ENCODE measurements at regions of chr1 and their contacts with region 1.

Region 1: DNA sequence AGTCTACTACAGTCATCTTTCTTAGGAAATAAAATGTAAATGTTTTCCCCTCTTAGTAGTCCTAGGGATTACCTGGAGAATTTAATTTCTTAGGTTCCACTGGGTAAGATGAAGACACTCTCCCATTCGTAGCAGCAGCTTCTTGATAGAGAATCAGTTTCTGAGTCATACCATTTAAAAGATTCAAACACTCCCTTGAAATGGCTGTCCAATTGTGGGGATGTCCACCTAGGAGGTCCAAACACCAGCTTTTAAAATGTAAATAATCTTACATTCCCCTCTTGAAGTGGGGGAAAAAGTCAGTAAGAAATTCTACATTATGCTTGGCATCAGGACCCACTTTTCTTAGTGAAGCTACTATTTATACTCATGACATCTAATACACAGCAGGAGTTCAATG is 37.5 kb downstream of the NDC1 start:
- DNase-seq: no peak
- ATAC-seq: no peak
- H3K4me3 ChIP-seq: no peak overlapping the region
- H3K4me3 Mint-ChIP-seq: no peak overlapping the region
- H3K27ac ChIP-seq: no peak overlapping the region
- H3K27ac Mint-ChIP-seq: no peak overlapping the region
- H3K4me1 ChIP-seq: no peaks in the 10 kb centered on the region
- H3K4me1 Mint-ChIP-seq: no peaks in the 10 kb centered on the region
- H3K27me3 ChIP-seq: no peaks in the 10 kb centered on the region
- H3K27me3 Mint-ChIP-seq: no peaks in the 10 kb centered on the region

Region 2: DNA sequence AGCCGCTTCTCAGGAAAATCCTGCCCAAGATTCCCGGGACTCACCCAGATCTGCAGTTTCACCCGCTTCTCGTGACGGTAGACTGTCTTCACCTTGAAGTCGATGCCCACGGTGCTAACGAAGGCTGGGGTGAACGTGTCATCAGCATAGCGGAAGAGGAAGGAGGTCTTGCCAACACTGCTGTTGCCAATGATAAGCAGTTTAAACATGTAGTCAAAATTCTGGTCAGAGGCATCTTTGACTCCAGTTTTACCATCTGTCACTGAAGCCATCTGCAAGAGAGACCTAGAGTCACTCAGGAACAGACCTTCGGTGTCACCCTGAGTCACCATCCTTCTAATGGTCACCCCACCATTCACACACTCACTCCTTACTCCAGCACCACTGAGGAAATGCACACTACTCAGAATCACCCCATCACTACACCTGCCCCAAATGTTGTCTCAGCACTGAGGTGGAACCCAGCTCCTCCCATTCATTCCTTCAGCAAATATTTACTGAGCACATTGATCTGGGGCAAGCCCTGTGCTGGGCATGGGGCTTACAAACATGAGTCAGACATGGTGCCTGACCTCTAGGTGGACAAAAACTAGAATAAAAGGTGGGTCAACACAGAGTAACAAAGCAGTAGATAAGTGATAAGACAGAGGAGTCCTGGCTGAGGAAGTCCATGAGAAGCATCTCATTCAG is 1823.6 kb before region 1 on chr1:
- CTCF ChIA-PET with region 1: no interaction called
- POLR2A ChIA-PET with region 1: no interaction called
- DNase-seq: no peak
- ATAC-seq: no peak
- H3K4me3 ChIP-seq: no peak overlapping the region
- H3K4me3 Mint-ChIP-seq: no peak overlapping the region
- H3K27ac ChIP-seq: no peak overlapping the region
- H3K27ac Mint-ChIP-seq: no peak overlapping the region
- H3K4me1 ChIP-seq: no peaks in the 10 kb centered on the region
- H3K4me1 Mint-ChIP-seq: no peaks in the 10 kb centered on the region
- H3K27me3 ChIP-seq: no peaks in the 10 kb centered on the region
- H3K27me3 Mint-ChIP-seq: no peaks in the 10 kb centered on the region

Region 3: DNA sequence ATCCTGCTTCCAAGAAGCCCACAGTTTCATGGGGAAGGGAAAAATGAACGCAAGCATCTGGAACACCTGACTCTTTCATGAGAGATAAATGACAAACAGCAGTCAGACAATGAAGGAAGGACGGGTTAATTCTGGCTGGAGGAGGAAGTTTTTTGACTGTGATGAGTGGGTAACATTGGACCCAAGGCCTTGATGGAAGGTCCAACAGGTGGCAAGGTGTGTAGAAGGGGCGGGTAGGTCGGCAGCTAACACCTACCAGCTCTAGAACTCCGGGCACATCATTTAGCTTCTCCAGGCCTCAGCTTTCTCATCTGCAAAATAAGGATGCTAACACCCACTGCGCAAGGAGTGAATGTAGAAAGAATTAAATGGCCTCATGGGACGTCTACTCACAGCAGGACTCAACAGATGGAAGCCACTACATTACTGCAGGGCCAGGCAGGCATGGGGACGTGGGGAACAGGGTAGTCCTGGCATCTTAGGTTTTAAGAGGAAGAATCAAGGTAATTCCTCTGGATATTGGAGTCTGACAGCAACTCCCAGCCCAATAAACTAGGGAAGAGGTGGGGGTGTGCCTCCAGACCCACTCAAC is 74.5 kb before region 1 on chr1:
- CTCF ChIA-PET with region 1: no interaction called
- POLR2A ChIA-PET with region 1: interaction called in 1 of 2 experiments, 11 read pairs
- DNase-seq: no peak
- ATAC-seq: no peak
- H3K4me3 ChIP-seq: no peak overlapping the region
- H3K4me3 Mint-ChIP-seq: no peak overlapping the region
- H3K27ac ChIP-seq: no peak overlapping the region
- H3K27ac Mint-ChIP-seq: no peak overlapping the region
- H3K4me1 ChIP-seq: no peaks in the 10 kb centered on the region
- H3K4me1 Mint-ChIP-seq: no peaks in the 10 kb centered on the region
- H3K27me3 ChIP-seq: peaks cover 0 to 5% of the 10 kb centered on the region in 2 experiments
- H3K27me3 Mint-ChIP-seq: no peaks in the 10 kb centered on the region

Region 4: DNA sequence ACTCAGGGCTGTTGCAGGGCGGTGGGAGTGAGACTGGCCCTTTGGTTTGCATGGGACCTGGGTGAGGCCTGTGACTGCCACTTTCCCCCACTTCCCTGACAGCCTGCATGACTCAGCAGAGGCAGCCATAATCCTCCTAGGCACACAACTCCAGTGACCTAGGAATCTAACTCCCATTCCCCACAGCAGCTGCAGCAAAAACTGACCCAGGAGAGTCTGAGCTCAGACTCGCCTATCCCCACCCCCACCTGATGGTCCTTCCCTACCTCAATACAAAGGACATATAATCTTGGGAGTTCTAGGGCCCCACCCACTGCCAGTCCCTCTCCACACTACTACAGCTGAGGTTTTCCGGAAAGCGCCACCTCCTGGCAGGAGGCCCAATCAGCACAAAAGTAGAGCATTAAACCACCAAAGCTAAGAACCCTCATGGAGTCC is 10.8 kb after region 1 on chr1:
- CTCF ChIA-PET with region 1: interaction called in 1 of 2 experiments, 10 read pairs
- POLR2A ChIA-PET with region 1: no interaction called
- DNase-seq: peak in 2 of 35 experiments; percentile 9
- ATAC-seq: no peak
- H3K4me3 ChIP-seq: no peak overlapping the region
- H3K4me3 Mint-ChIP-seq: no peak overlapping the region
- H3K27ac ChIP-seq: no peak overlapping the region
- H3K27ac Mint-ChIP-seq: no peak overlapping the region
- H3K4me1 ChIP-seq: no peaks in the 10 kb centered on the region
- H3K4me1 Mint-ChIP-seq: peaks cover 0 to 11% (median 3%) of the 10 kb centered on the region in 3 donors
- H3K27me3 ChIP-seq: no peaks in the 10 kb centered on the region
- H3K27me3 Mint-ChIP-seq: no peaks in the 10 kb centered on the region

Measured in T-cell (primary cell).